ACHN (cell line): ENCODE measurements at regions of chr17 and their contacts with region 1.

Region 1: DNA sequence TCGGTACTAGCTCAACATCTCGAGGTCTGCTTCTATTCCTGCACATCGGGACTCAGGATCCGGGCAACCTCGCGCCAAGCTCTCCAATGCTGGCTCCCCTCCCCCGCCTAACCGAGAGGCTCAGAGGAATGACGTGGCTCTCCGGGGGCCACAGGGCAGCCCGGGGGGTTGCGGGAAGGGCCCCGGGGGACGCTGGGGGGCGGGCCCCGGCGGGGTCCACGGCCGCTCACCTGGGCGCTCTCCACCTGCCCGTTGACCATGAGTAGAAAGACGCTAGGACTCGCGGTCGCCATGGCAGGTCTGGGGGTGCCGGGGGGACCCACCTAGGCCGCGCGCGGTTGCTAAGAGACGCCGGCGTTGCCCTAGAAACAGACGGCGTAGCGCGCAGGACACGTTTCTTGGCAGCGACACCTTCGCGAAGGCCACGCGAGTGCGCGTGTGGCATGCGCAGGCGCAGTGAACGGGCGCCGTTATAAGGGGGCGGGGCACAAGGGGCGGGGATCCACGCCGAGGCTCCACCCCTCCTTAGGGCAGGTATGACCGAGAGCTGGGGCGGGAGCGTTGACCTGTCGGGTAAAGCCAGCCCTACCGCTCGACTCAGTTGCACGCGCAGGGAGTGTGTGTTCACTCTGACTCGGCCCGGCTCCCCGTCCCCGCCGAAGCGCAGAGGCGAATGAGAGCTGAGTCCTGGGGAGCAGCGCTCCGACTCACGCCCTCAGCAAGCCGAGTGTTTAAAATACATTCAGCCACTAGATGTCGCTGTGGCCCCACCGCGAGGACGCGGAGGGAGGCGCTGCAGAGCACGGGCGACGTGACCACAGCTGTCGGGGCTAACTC is at the start of gene B9D1:
- DNase-seq: peak; percentile 95

Region 2: DNA sequence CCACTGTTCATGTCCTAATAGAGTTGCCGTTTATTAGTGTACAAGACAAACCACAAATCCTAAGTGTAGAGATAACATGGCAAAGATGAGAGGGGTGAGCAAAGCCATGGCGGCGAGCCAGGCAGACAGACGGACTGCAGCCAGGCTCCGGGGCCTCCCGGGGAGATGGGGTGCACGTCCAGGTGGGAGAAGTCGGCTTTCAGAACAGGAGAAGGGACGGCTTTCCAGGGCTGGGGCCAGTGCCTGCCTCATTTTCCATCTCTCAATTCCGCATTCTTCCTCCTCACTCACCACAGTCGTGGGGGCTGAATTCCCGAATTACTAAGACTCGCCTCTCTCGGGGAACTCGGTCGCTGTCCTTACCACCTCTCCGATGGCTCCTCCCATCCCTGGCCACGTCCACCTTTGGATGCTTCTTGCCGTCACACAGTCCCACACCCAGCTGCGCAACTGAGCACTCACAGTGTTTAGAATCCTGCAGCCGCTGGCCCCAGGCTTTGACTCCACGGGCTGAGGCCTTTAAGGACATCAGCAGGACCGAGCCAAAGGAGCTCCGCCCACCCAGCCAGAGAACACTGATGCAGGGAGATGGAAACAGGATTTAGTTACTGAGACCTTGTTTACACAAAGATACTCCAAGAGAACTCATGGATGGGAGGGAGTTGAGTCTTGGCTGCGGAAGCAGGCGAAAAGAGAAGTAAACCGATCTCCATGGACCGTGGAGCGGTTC is 108.2 kb after region 1 on chr17:
- in situ Hi-C with region 1: loop called (anchors 25 kb)
- DNase-seq: no peak

Region 3: GRCh38 chr17:19502517-19502916 is 140.0 kb after region 1 on chr17:
- in situ Hi-C with region 1: no loop called
- DNase-seq: no peak

Region 4: GRCh38 chr17:19796457-19796856 is 434.0 kb after region 1 on chr17:
- in situ Hi-C with region 1: no loop called
- DNase-seq: no peak